Right ventricle myocardium inferior (tissue), 1 donor: ENCODE measurements at regions of chr9 and their contacts with region 1.

Region 1: DNA sequence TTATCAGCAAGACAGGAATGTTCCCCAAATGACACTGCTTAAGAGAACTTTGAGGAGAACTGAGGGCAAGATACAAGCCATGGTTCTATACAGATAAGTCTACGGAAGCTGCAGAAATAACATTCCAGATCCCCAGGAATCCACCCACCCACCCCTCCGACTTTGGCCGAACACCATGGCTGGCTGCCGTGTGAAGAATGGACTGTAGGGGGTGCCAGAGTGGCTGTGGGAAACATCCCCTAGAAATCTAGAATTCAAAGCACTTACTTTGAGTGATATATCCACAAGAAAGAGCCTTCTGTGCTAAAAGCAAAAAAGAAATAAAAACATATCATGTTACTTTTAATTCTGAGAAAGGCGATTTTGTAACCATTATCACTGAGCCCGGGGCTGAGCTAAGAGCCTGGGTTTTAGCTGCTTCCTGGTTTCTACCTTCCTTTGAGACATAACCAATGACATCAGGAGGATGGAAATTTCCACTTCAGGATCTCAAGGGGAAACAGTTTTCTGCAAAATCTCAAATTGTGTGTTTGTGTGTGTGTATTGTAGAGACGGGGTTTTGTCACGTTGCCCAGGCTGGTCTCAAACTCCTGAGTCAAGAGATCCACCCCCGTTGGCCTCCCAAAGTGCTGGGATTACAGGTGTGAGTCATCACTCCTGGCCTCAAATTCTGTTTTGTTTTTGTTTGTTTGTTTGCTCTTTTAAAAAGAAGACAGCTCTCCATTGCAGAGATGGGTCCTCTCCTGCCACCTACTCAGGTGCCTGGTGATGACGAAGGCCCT is 36.4 kb downstream of the GGTA1 start:
- DNase-seq: no peak
- ATAC-seq: peak; percentile 49

Region 2: DNA sequence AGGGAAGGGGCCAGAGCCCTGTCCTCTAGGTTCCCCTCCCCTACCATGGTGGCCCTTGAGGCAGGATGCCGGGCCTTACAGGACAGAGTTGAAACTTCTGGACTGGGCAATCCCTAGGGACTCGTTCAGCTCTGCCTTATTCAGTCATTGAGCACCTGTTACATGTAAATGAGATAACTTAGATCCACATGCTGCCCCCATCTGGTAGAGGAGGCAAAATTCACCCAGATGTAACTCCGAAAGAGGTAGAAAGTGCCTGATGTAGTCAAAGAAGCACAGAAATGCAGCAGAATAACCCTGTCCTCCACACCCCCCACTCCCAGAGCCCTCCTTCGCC is 34.9 kb after region 1 on chr9:
- intact Hi-C with region 1: loop called (anchors 1 kb)
- DNase-seq: no peak
- ATAC-seq: peak; percentile 61

Region 3: DNA sequence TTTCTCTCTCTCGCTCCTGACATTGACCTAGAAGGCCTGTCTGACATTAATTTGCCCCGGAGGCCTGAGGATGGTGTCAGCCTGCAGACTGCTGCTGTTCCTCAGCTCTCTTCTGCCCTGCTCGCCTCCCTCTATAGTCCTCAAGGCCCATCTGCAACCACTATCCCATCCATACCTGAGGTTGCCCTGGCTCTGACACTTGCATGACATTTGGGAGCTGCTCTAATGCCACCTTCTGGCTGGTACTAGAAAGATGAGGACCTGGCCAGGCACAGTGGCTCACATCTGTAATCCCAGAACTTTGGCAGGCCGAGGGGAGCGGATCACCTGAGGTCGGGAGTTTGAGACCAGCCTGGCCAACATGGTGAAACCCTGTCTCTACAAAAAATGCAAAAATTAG is 75.0 kb after region 1 on chr9:
- intact Hi-C with region 1: loop called (anchors 1 kb)
- DNase-seq: no peak
- ATAC-seq: peak; percentile 55